WTC11 (cell line): ENCODE measurements at regions of chr3 and their contacts with region 1.

Region 1: DNA sequence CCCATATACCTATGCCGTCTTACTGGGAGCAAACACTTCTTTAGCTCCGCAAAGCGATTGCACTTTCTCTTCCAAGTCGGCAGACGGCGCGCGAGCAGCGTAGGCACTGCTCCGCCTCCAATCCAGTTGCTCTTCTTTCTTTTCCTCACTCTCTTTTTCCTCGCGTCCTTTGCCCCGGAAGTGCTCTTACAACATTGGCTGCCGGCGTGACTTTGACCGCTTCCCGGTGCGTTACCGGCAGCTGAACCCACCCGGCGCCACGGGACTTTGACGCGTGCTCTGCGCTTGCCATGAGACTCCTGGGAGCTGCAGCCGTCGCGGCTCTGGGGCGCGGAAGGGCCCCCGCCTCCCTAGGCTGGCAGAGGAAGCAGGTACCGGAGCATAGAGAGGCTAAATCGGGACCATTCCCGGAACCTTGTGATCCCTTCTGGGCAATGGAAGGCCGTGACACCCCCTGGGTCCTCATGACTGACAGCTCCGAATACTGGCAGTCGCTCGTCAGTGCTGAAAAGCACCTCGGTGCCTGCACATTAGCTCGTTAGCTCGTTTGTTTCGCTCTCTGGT is at the start of gene GFM1:
- DNase-seq: peak; percentile 86
- ATAC-seq: peak; percentile 99
- H3K4me3 Mint-ChIP-seq: peak within 1 kb of the TSS; percentile 98
- H3K27ac Mint-ChIP-seq: peak within 1 kb of the TSS; percentile 92
- H3K4me1 Mint-ChIP-seq: peaks cover 6% of the 10 kb centered on the region
- H3K27me3 Mint-ChIP-seq: peaks cover 5% of the 10 kb centered on the region; the same call in 1 of the 2 replicates
- CTCF ChIP-seq: peak; percentile 47; the same call in 1 of the 2 replicates
- total RNA-seq, gene GFM1: 38.9 to 44.5 TPM (median 43.2 TPM) in 3 replicates

Region 2: DNA sequence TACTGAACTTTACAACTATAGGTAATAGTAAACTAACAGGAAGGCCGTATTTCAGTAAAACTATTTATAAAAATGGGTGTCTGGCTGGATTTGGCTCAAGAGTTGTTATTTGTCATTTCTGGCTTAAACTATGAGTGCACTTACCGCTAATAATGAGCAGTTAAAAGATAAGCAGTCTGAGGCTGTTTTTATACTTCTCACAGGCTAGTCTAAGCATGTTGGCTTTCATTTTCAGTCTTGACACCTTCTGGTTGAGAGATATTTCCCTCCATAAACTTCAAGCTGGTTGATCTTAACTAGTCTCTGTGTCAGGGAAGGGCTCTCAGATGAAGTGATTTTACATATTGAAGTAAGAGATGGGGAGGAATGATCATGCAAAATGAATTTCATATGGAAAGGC is 438.4 kb before region 1 on chr3:
- CTCF ChIA-PET with region 1: no interaction called
- POLR2A ChIA-PET with region 1: no interaction called
- DNase-seq: no peak
- ATAC-seq: no peak
- H3K4me3 Mint-ChIP-seq: no peak overlapping the region
- H3K27ac Mint-ChIP-seq: no peak overlapping the region
- H3K4me1 Mint-ChIP-seq: no peaks in the 10 kb centered on the region
- H3K27me3 Mint-ChIP-seq: no peaks in the 10 kb centered on the region
- CTCF ChIP-seq: no peak

Region 3: GRCh38 chr3:158522221-158523136 is 121.9 kb before region 1 on chr3:
- CTCF ChIA-PET with region 1: no interaction called
- POLR2A ChIA-PET with region 1: no interaction called
- DNase-seq: no peak
- ATAC-seq: no peak
- H3K4me3 Mint-ChIP-seq: no peak overlapping the region
- H3K27ac Mint-ChIP-seq: no peak overlapping the region
- H3K4me1 Mint-ChIP-seq: peaks cover 3% of the 10 kb centered on the region; the same call in 1 of the 2 replicates
- H3K27me3 Mint-ChIP-seq: no peaks in the 10 kb centered on the region
- CTCF ChIP-seq: no peak

Region 4: GRCh38 chr3:158539414-158540014 is 104.9 kb before region 1 on chr3:
- CTCF ChIA-PET with region 1: interaction called, 10 read pairs
- POLR2A ChIA-PET with region 1: no interaction called
- DNase-seq: no peak
- ATAC-seq: peak; percentile 78
- H3K4me3 Mint-ChIP-seq: no peak overlapping the region
- H3K27ac Mint-ChIP-seq: no peak overlapping the region; the same call in 1 of the 2 replicates
- H3K4me1 Mint-ChIP-seq: no peaks in the 10 kb centered on the region
- H3K27me3 Mint-ChIP-seq: no peaks in the 10 kb centered on the region
- CTCF ChIP-seq: no peak

Region 5: GRCh38 chr3:158570999-158571974 is 73.1 kb before region 1 on chr3 and contains the start of gene MLF1:
- CTCF ChIA-PET with region 1: interaction called, 17 read pairs
- POLR2A ChIA-PET with region 1: interaction called, 3 read pairs
- DNase-seq: peak; percentile 98
- ATAC-seq: peak; percentile 97
- H3K4me3 Mint-ChIP-seq: peak within 1 kb of the TSS; percentile 92
- H3K27ac Mint-ChIP-seq: peak within 1 kb of the TSS; percentile 89
- H3K4me1 Mint-ChIP-seq: peaks cover 27% of the 10 kb centered on the region
- H3K27me3 Mint-ChIP-seq: peaks cover 43% of the 10 kb centered on the region
- CTCF ChIP-seq: no peak
- total RNA-seq, gene MLF1: 22.3 to 35.6 TPM (median 31.9 TPM) in 3 replicates

Region 6: DNA sequence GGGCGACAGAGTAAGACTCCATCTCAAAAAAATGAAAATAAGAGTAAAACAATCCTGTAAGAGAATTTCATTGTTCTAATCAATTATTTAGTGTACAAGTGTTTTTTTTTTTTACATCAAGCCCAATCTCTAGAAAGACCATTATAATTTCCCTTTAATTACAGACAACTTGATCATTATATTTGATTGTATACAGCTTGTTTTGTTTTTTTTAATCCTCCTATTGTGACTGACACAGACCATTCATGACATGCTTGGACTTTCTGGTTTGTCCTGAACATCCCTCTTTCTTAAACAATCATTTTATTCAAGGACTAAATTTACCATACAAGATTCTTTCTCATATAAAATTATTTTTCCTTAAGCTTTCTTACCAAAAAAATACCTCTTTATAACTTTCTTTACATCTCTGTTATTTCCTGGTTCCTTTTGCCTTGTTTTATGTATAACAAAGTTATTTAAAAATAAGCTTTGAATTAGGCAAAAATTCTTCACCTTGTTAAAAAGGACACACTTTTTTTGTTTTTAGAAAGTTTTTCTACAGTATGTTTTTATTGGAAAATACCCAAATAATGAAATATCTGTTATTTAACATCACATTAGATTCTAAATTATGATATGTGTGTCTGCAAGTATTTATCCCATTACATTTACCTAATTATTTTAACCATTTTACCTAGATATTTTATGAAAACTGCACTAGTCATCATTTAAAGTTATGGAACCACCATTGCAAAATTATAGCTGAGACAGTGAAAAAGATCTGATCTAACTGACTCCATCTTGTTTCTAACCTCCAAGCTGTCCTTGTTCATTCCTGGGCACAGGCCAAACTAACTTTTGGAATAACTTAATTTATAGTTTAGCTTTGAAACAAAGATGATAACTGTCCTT is 26.2 kb before region 1 on chr3:
- CTCF ChIA-PET with region 1: no interaction called
- POLR2A ChIA-PET with region 1: no interaction called
- DNase-seq: no peak
- ATAC-seq: no peak
- H3K4me3 Mint-ChIP-seq: no peak overlapping the region
- H3K27ac Mint-ChIP-seq: no peak overlapping the region
- H3K4me1 Mint-ChIP-seq: no peaks in the 10 kb centered on the region
- H3K27me3 Mint-ChIP-seq: peaks cover 3% of the 10 kb centered on the region; the same call in 1 of the 2 replicates
- CTCF ChIP-seq: no peak